H1 (cell line): ENCODE measurements at regions of chr10 and their contacts with region 1.

Region 1: GRCh38 chr10:24617771-24618391 is 105.8 kb downstream of the ARHGAP21 start:
- DNase-seq: peak; percentile 60 to 89
- H3K4me3 ChIP-seq: no peak overlapping the region
- H3K27ac ChIP-seq: no peak overlapping the region
- H3K4me1 ChIP-seq: no peaks in the 10 kb centered on the region
- H3K27me3 ChIP-seq: no peaks in the 10 kb centered on the region
- CTCF ChIP-seq: peak; percentile 79 to 91 (median 83)
- EP300 ChIP-seq: no peak
- POLR2A ChIP-seq: no peak
- RAD21 ChIP-seq: peak; percentile 69 to 72

Region 2: DNA sequence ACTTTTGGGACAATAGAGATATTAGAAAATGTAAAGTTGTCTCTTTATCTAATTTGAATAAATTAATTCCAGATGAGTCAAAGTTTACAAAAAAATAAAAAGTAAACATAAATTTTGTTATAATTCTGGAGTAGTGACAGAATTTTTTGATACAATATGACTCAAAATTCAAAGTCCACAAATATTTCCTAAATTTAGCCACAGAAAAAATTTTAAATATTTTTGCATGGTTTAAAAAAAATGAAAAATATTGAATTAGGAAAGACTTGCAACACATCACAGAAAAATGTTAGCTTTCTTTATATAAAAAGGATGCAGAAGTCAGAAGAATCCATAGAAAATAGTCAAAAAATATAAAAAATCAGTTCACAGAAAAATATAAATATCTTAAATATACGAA is 11.9 kb before region 1 on chr10:
- CTCF ChIA-PET with region 1: interaction called, 14 read pairs
- POLR2A ChIA-PET with region 1: no interaction called
- DNase-seq: no peak
- H3K4me3 ChIP-seq: no peak overlapping the region
- H3K27ac ChIP-seq: no peak overlapping the region
- H3K4me1 ChIP-seq: no peaks in the 10 kb centered on the region
- H3K27me3 ChIP-seq: no peaks in the 10 kb centered on the region
- CTCF ChIP-seq: no peak
- EP300 ChIP-seq: no peak
- POLR2A ChIP-seq: no peak
- RAD21 ChIP-seq: no peak

Region 3: DNA sequence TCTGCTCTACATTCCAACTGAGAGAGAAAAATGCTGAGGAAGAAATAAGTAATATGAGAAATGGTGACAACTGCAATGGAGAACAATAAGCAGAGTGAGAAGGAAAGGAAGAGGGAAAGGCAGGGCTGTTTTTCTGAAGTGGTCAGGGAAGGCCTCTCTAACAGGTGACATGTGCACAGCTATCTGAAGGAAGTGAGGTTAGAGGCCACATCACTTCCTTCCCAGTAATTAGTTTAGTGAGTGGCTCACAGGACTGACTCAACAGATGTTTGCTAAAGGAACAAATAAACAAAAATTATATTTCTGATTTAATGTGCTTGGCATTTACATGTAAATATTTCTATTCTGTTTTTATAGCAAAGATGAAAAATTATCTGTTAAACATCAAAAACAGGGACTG is 27.9 kb after region 1 on chr10:
- CTCF ChIA-PET with region 1: interaction called, 16 read pairs
- POLR2A ChIA-PET with region 1: no interaction called
- DNase-seq: no peak
- H3K4me3 ChIP-seq: no peak overlapping the region
- H3K27ac ChIP-seq: no peak overlapping the region
- H3K4me1 ChIP-seq: peaks cover 0 to 3% (median 0%) of the 10 kb centered on the region in 4 experiments; a peak in 2 of 7 replicates
- H3K27me3 ChIP-seq: peaks cover 0 to 1% (median 0%) of the 10 kb centered on the region in 4 experiments; a peak in 1 of 7 replicates
- CTCF ChIP-seq: no peak
- EP300 ChIP-seq: no peak
- POLR2A ChIP-seq: no peak
- RAD21 ChIP-seq: no peak

Region 4: GRCh38 chr10:24690961-24691512 is 73.2 kb after region 1 on chr10:
- CTCF ChIA-PET with region 1: no interaction called
- POLR2A ChIA-PET with region 1: no interaction called
- DNase-seq: no peak
- H3K4me3 ChIP-seq: no peak overlapping the region
- H3K27ac ChIP-seq: no peak overlapping the region
- H3K4me1 ChIP-seq: no peaks in the 10 kb centered on the region
- H3K27me3 ChIP-seq: no peaks in the 10 kb centered on the region
- CTCF ChIP-seq: no peak
- EP300 ChIP-seq: no peak
- POLR2A ChIP-seq: no peak
- RAD21 ChIP-seq: no peak

Region 5: DNA sequence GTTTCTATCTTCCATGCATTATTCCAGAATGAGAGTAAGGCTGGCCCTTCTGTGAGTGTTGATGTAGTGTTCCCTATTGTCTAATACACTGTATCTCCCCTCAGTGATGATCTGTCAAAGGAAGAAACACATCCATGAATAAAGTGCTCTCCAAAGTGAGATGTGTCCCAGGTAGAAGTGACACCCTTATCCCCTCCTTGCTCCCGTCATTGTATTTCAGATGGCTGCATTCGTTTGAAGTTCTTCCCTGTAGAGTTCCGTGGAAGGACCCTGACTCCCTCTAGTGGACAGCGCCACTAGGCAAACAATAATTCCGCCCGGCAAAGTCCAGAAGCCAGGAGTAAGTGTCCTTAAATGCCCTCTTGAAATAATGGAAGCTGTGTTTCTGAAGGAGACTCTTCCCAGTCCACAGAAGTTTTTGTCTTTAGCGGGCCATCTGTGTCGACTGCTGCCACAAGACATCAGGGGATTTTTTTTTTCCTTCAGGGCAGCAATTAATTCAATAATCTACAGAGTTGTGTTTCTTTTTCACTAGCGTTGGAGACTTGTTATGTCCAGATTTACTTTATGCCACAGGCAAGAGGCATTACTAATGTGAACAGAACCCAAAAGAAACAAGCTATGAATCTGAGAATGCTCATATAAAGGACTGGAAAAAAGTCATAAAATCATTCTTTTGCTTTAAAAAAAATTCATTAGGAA is 463.1 kb after region 1 on chr10:
- CTCF ChIA-PET with region 1: interaction called, 17 read pairs
- POLR2A ChIA-PET with region 1: no interaction called
- DNase-seq: peak; percentile 76 to 84
- H3K4me3 ChIP-seq: no peak overlapping the region
- H3K27ac ChIP-seq: no peak overlapping the region
- H3K4me1 ChIP-seq: peaks cover 0 to 5% (median 3%) of the 10 kb centered on the region in 4 experiments; a peak in 3 of 7 replicates
- H3K27me3 ChIP-seq: no peaks in the 10 kb centered on the region
- CTCF ChIP-seq: peak; percentile 68 to 88 (median 86)
- EP300 ChIP-seq: no peak
- POLR2A ChIP-seq: no peak
- RAD21 ChIP-seq: peak; percentile 94 to 96